Activated B cell treated with CpG ODN at 0.5 μM for 24 hours (primary cell): ENCODE measurements at regions of chr2 and their contacts with region 1.

Region 1: DNA sequence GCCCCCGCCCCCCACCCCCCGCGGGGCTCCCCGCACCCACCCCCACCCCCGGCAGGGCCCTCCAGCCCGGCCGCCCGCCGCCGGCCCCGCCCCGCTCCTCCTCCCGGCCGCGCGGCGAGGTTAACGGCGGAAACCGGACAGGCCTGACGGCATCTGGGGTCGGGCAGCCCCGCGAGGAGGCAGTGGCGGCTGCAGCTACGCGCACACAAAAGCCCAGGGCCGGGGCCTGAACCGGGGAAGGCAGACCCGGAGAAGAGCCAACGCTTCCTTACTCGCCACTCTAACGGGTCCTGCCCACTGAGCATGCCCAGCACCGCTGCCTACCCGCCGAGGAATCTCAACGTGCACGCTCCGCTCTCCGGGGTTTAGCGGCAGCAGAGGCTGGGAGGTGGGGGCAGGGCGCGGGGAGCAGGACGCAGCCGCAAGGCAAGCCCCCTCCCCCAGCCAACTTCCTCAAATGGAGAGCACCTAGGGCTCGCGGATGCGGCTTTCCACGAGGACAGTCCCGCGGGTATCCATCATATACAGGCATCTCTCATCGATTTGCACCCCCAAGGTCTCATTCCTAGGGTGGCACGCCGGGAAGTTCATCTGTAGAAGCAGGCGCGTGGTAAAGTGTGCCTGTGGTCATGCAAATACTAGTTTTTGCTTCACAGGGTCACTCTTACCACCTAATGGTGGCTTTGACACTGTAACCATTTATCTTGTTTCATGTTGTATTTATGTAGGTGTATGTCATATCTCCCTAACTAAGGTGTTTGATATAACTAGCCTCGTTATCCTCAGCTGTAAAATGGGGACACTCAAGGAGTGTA is at the start of gene MEMO1:
- DNase-seq: peak; percentile 93
- ATAC-seq: peak; percentile 81
- H3K4me3 Mint-ChIP-seq: peak within 1 kb of the TSS; percentile 91
- H3K27ac Mint-ChIP-seq: peak within 1 kb of the TSS; percentile 96
- H3K4me1 Mint-ChIP-seq: peaks cover 39% of the 10 kb centered on the region
- H3K27me3 Mint-ChIP-seq: no peaks in the 10 kb centered on the region
- CTCF ChIP-seq: no peak
- total RNA-seq, gene MEMO1: 68.7 and 71.6 TPM in 2 replicates

Region 2: DNA sequence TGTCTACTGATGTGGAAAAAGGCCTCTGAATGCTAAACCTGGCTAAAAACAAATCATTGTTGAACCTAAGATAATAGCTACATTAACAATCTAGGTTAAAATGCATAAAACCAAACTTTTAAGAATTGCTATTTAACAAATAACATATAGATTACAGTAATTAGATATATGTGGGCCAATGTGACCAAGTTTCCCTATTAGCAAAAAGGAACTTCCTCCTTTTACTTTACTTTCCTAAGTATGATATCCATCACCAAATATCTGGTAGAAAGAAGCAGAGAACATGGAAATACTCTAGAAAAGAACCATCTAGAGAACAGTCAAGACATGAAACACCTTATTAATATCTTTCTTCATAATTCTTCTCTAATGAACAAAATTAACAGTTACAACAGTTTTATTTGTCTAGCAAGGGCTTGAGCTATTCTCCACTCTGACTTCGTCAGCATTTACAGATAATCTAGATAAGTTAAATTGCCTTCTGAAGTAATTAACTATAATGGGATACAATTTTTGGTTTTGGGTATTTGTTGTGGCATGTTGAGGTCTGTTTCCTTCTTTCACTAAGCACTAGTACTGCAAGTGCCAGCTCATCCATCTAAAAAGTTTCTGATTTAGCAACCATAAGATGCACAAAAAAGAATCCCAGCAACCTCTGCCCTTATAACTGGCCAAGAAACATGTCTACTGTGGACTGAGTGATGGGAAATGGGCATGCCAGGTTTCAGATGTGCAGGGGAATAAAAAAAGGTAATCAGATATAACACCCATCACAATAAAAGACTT is 53.3 kb before region 1 on chr2:
- CTCF ChIA-PET with region 1: no interaction called
- POLR2A ChIA-PET with region 1: interaction called, 3 read pairs
- intact Hi-C with region 1: loop called (anchors 2 kb)
- DNase-seq: no peak
- ATAC-seq: peak; percentile 37
- H3K4me3 Mint-ChIP-seq: peak overlapping the region; percentile 55
- H3K27ac Mint-ChIP-seq: peak overlapping the region; percentile 65
- H3K4me1 Mint-ChIP-seq: peaks cover 59% of the 10 kb centered on the region
- H3K27me3 Mint-ChIP-seq: no peaks in the 10 kb centered on the region
- CTCF ChIP-seq: no peak

Region 3: GRCh38 chr2:31980674-31981356 is 30.1 kb before region 1 on chr2:
- CTCF ChIA-PET with region 1: no interaction called
- POLR2A ChIA-PET with region 1: no interaction called
- intact Hi-C with region 1: loop called (anchors 1 kb)
- DNase-seq: no peak
- ATAC-seq: peak; percentile 99
- H3K4me3 Mint-ChIP-seq: peak overlapping the region; percentile 56
- H3K27ac Mint-ChIP-seq: peak overlapping the region; percentile 87
- H3K4me1 Mint-ChIP-seq: peaks cover 34% of the 10 kb centered on the region
- H3K27me3 Mint-ChIP-seq: no peaks in the 10 kb centered on the region
- CTCF ChIP-seq: no peak

Region 4: DNA sequence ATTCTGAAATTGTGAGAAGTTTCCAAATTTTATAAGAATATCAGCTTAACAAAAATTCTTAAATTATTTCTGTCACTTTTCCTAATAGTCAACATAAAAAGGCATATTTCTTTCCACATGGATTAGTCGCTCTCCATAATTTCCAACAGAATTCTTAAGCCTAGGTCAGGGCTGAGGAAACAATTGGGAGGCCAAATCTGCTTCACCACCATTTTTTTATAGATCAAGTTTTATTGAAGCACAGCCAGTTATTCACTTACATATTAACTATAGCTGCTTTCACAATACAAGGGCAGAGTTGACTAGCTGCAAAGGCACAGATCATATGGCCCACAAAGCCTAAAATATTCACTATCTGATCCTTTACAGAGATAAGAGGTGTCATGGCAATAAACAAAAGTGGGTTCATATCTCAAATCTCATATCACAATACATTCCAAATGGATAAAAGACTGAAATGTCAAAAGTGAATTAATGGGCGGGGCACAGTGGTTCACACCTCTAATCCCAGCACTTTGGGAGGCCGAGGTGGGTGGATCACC is 18.8 kb before region 1 on chr2:
- CTCF ChIA-PET with region 1: interaction called, 3 read pairs
- POLR2A ChIA-PET with region 1: interaction called, 3 read pairs
- intact Hi-C with region 1: loop called (anchors 2 kb)
- DNase-seq: no peak
- ATAC-seq: no peak
- H3K4me3 Mint-ChIP-seq: no peak overlapping the region
- H3K27ac Mint-ChIP-seq: no peak overlapping the region
- H3K4me1 Mint-ChIP-seq: peaks cover 43% of the 10 kb centered on the region
- H3K27me3 Mint-ChIP-seq: no peaks in the 10 kb centered on the region
- CTCF ChIP-seq: no peak

Region 5: DNA sequence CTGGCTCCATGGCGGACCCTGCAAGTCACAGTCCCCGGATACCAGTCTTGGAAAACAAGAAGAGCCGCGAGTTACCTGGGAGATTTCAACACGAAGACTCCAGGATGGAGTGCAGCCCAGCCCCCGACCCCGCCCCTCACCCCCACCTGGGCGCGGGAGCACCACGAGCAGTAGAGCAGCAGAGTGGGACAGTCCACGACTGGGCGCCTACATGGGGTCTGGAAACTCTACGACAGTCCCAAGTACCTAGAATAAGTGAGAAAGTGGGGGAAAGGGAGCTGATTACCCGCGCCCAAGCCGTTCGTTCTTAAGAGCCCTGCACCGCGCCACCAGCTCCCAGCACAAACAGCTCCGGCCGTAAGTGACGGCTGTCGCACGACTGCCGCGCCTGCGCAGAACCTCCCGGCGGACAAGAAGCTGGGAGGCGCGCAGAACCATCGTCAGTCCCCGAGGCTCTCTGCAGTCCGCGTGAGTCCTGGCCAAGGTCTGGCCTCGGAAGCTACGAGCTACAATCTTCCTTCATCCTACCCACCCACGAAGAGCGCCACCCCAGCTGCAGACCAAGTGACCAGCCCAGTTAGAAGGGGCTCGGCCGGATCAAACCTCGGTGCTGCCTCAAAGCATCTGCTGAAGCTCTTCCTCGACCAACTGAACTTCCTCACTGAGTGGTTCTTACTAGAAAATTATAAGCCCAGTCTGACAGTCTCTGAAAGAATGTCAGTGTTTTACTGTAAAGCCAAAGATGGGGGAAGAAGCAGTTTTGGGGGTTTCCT is 28.8 kb after region 1 on chr2 and contains the start of gene DPY30:
- CTCF ChIA-PET with region 1: no interaction called
- POLR2A ChIA-PET with region 1: interaction called, 33 read pairs
- intact Hi-C with region 1: loop called (anchors 1 kb)
- DNase-seq: peak; percentile 88
- ATAC-seq: peak; percentile 92
- H3K4me3 Mint-ChIP-seq: peak within 1 kb of the TSS; percentile 84
- H3K27ac Mint-ChIP-seq: peak within 1 kb of the TSS; percentile 91
- H3K4me1 Mint-ChIP-seq: peaks cover 17% of the 10 kb centered on the region
- H3K27me3 Mint-ChIP-seq: no peaks in the 10 kb centered on the region
- CTCF ChIP-seq: no peak
- total RNA-seq, gene DPY30: 36.2 and 37.6 TPM in 2 replicates

Region 6: DNA sequence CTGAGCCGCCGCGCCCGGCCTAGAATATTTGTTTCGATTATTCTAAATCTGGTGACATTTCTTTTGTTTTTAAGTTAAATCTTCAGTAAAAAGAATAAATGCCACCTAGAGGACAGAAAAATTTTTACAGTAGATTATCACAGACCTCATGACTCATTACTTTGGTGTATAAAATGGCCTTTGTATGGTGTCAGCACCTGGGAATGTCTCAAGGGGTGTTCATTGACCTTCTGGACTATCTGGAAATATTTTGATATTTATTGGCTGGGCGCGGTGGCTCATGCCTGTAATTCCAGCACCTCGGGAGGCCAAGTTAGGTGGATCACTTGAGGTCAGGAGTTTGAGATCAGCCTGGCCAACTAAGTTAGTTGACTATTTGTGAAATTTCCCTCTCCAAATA is 124.5 kb after region 1 on chr2:
- CTCF ChIA-PET with region 1: no interaction called
- POLR2A ChIA-PET with region 1: no interaction called
- intact Hi-C with region 1: loop called (anchors 10 kb)
- DNase-seq: no peak
- ATAC-seq: peak; percentile 31
- H3K4me3 Mint-ChIP-seq: no peak overlapping the region
- H3K27ac Mint-ChIP-seq: no peak overlapping the region
- H3K4me1 Mint-ChIP-seq: peaks cover 2% of the 10 kb centered on the region
- H3K27me3 Mint-ChIP-seq: no peaks in the 10 kb centered on the region
- CTCF ChIP-seq: no peak

Region 7: GRCh38 chr2:32356735-32357644 is 346.1 kb after region 1 on chr2 and contains the start of gene BIRC6:
- CTCF ChIA-PET with region 1: no interaction called
- POLR2A ChIA-PET with region 1: interaction called, 3 read pairs
- intact Hi-C with region 1: loop called (anchors 2 kb)
- DNase-seq: peak; percentile 96
- ATAC-seq: peak; percentile 87
- H3K4me3 Mint-ChIP-seq: peak within 1 kb of the TSS; percentile 93
- H3K27ac Mint-ChIP-seq: peak within 1 kb of the TSS; percentile 90
- H3K4me1 Mint-ChIP-seq: peaks cover 41% of the 10 kb centered on the region
- H3K27me3 Mint-ChIP-seq: no peaks in the 10 kb centered on the region
- CTCF ChIP-seq: no peak
- total RNA-seq, gene BIRC6: 155 and 180 TPM in 2 replicates